ENCODE measurements at regions of chr3 and their contacts with region 1.

Region 1: GRCh38 chr3:63911873-63912767 is at the start of gene SCAANT1:
- DNase-seq: peak; percentile 61
- H3K4me3 ChIP-seq: peak within 1 kb of the TSS; percentile 72 to 97 (median 94)
- H3K27ac ChIP-seq: peak within 1 kb of the TSS; percentile 91 to 100 (median 100)
- H3K4me1 ChIP-seq: peaks cover 13 to 42% (median 21%) of the 10 kb centered on the region in 3 donors
- H3K27me3 ChIP-seq: no peaks in the 10 kb centered on the region
- CTCF ChIP-seq: peak in 4 of 6 experiments; percentile 5 to 23 (median 17)
- POLR2A ChIP-seq: peak in 3 of 4 donors; percentile 35 to 71 (median 70)
- total RNA-seq, gene SCAANT1: not detected

Region 2: DNA sequence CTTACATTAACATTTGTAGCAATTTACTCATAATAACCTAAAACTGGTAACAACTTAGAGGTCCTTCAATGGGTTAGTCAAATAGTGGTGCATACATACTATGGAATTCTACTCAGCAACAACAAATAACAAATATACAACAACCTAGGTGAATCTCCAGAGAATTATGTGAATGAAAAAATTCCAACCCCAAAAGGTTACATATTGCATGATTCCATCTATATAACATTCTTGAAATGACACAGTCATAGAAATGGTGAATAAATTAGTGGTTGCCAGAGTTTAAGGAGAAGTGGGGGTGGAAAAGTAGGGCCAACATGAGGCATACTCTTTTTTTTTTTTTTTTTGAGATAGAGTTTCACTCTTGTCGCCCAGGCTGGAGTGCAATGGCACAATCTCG is 272.3 kb before region 1 on chr3:
- intact Hi-C with region 1: no loop called
- DNase-seq: no peak
- H3K4me3 ChIP-seq: no peak overlapping the region
- H3K27ac ChIP-seq: no peak overlapping the region
- H3K4me1 ChIP-seq: no peaks in the 10 kb centered on the region
- H3K27me3 ChIP-seq: no peaks in the 10 kb centered on the region
- CTCF ChIP-seq: no peak
- POLR2A ChIP-seq: no peak

Region 3: GRCh38 chr3:63993653-63994079 is 81.5 kb after region 1 on chr3:
- intact Hi-C with region 1: loop called (anchors 10 kb)
- DNase-seq: peak; percentile 11
- H3K4me3 ChIP-seq: no peak overlapping the region
- H3K27ac ChIP-seq: no peak overlapping the region
- H3K4me1 ChIP-seq: peaks cover 0 to 7% (median 0%) of the 10 kb centered on the region in 3 donors
- H3K27me3 ChIP-seq: no peaks in the 10 kb centered on the region
- CTCF ChIP-seq: peak; percentile 81 to 96 (median 95)
- POLR2A ChIP-seq: no peak

Measured in esophagus squamous epithelium (tissue), 5 donors.